ENCODE measurements at regions of chr11 and their contacts with region 1.

Region 1: DNA sequence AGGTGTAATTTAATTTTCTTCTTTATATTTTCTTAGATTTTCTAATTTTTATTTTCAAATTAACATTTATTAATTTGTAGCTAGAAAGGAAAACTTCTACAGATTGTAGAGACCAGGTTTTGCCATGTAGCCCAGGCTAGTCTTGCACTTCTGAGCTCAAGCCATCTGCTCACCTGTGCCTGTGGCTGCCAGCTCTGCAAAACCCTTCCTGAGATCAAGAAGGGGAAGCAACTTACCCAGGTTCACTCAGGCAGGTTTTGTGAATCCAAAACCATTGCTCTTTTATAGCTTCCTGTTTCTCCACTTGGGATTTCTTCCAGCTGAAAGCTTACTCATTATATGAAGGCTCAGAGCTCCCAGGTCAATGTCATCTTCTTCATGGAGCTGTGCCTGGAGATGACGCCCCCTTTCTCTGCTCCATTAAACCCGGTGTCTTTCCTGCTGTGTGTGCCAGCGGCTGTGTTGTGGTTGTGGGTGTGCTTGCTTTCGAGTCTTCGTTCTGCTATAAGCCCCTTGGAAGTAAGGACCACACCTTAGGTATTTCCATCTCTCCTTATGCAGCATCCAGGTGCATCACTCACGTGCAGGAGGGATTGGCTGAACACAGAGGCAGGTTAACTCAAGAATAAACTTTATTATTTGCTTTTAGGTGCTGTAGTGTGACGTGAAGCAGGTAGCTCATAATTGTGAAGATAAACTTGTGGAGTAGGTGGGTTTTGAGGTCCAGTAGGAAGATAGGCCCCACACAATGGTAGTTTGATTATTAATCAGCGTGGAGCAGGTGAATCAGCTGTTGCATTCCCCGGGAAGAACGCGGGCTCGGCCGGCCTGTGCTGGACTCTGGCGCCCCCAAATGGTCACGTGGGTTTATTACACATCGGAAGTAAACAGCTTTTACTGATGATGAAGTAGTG is 42.2 kb upstream of the INCENP start:
- DNase-seq: peak; percentile 8
- ATAC-seq: peak; percentile 85
- H3K4me3 ChIP-seq: peak overlapping the region; percentile 11; the same call in 1 of the 2 replicates
- H3K27ac ChIP-seq: no peak overlapping the region
- H3K4me1 ChIP-seq: peaks cover 5% of the 10 kb centered on the region; the same call in 1 of the 2 replicates
- H3K27me3 ChIP-seq: no peaks in the 10 kb centered on the region
- CTCF ChIP-seq: peak; percentile 89 to 99 (median 89); a peak in 5 of 6 replicates
- EP300 ChIP-seq: no peak
- POLR2A ChIP-seq: no peak
- RAD21 ChIP-seq: peak; percentile 96

Region 2: DNA sequence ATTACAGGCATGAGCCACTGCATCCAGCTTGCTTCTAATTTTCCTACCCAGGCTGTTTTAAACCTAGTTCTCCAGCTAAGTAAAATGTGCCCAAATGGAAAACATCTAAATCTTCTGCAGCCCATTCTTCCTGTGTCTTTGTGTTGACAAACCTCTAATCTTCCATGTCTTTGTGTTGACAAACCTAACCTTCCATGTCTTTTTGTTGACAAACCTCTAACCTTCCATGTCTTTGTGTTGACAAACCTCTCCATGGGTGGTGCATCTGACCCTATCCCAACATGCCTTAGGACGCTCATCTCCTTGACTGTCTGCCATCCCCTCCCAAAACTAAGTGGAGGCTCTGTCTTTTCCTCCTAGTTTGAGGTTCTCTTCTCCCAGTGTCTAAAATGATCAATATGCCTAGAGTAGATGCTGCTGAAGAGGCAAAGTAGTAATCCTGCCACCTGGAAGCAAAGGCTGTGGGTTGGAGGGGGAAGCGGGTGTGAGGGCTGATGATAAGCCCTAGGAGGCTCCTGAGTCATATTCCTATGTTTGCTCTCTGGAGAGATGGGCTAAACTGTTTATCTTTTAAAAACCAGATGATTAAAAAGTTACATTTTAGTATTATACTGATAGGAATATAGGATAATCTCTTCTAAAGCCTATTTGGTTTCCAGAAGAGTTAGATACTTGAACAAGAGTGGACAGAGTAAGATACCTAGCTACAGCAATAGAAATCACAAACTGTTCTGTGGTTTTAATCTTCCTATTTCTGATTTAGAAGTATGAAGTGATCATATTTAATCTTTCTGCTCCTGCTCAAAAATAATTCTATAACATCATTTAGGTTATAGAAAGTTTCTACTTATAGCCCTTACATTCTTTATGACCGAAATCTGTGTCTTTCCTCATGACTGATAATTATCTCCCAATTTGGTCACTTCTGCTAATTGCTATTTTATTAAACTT is 281.0 kb before region 1 on chr11:
- CTCF ChIA-PET with region 1: interaction called, 159 read pairs
- POLR2A ChIA-PET with region 1: interaction called, 7 read pairs
- RAD21 ChIA-PET with region 1: interaction called, 92 read pairs
- SMC1A ChIA-PET with region 1: interaction called, 79 read pairs
- in situ Hi-C with region 1: no loop called
- intact Hi-C with region 1: loop called (anchors 5 kb)
- DNase-seq: no peak
- ATAC-seq: no peak
- H3K4me3 ChIP-seq: no peak overlapping the region
- H3K27ac ChIP-seq: no peak overlapping the region
- H3K4me1 ChIP-seq: no peaks in the 10 kb centered on the region; the same call in 1 of the 2 replicates
- H3K27me3 ChIP-seq: no peaks in the 10 kb centered on the region
- CTCF ChIP-seq: no peak
- EP300 ChIP-seq: no peak
- POLR2A ChIP-seq: no peak
- RAD21 ChIP-seq: no peak

Region 3: GRCh38 chr11:61891331-61892084 is 190.1 kb before region 1 on chr11 and contains the start of gene FADS3:
- CTCF ChIA-PET with region 1: interaction called, 321 read pairs
- POLR2A ChIA-PET with region 1: no interaction called
- RAD21 ChIA-PET with region 1: interaction called, 175 read pairs
- SMC1A ChIA-PET with region 1: interaction called, 168 read pairs
- in situ Hi-C with region 1: loop called (anchors 5 kb)
- intact Hi-C with region 1: no loop called
- DNase-seq: no peak
- ATAC-seq: peak; percentile 86
- H3K4me3 ChIP-seq: peak within 1 kb of the TSS; percentile 83
- H3K27ac ChIP-seq: no peak within 1 kb of the TSS
- H3K4me1 ChIP-seq: peaks cover 7% of the 10 kb centered on the region
- H3K27me3 ChIP-seq: no peaks in the 10 kb centered on the region
- CTCF ChIP-seq: no peak; a peak in 1 of 6 replicates
- EP300 ChIP-seq: no peak
- POLR2A ChIP-seq: no peak
- RAD21 ChIP-seq: no peak
- polyA plus RNA-seq, gene FADS3: 0.23 to 0.44 TPM

Region 4: DNA sequence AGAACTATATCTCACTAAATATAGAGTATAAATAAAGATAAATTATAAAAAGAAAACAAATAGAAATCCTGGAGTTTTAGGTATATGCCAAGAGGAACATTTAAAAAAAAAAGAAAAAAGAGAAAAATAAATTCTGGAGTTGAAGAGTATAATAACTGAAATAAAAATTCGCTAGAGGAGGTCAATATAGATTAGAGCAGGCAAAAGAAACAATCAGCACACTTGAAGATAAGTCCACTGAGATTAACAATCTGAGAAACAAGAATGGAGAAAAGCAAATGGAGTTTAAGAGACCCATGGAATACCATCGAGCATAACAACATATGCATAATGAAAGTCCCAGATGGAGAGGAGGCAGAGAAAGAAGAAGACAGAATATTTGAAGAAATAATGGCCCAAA is 145.8 kb before region 1 on chr11:
- CTCF ChIA-PET with region 1: interaction called, 15 read pairs
- POLR2A ChIA-PET with region 1: no interaction called
- RAD21 ChIA-PET with region 1: no interaction called
- SMC1A ChIA-PET with region 1: no interaction called
- in situ Hi-C with region 1: no loop called
- intact Hi-C with region 1: no loop called
- DNase-seq: no peak
- ATAC-seq: no peak
- H3K4me3 ChIP-seq: no peak overlapping the region
- H3K27ac ChIP-seq: no peak overlapping the region
- H3K4me1 ChIP-seq: no peaks in the 10 kb centered on the region
- H3K27me3 ChIP-seq: no peaks in the 10 kb centered on the region; a peak in 2 of 4 replicates
- CTCF ChIP-seq: no peak
- EP300 ChIP-seq: no peak
- POLR2A ChIP-seq: no peak
- RAD21 ChIP-seq: no peak

Region 5: DNA sequence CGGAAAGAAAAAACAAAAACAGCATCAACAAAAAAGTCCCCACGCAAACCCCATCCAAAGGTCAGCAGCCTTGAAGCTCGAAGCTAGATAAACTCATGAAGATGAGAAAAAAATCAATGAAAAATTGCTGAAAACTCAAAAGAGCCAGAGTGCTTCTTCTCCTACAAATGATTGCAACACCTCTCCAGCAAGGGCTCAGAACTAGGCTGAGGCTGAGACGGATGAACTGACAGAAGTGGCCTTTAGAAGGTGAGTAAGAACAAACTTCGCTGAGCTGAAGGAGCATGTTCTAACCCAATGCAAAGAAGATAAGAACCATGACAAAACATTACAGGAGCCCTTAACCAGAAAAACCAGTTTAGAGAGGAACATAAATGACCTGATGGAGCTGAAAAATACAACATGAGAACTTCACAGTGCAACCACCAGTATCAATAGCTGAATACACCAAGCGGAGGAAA is 95.7 kb before region 1 on chr11:
- CTCF ChIA-PET with region 1: interaction called, 4 read pairs
- POLR2A ChIA-PET with region 1: no interaction called
- RAD21 ChIA-PET with region 1: no interaction called
- SMC1A ChIA-PET with region 1: interaction called, 10 read pairs
- in situ Hi-C with region 1: no loop called
- intact Hi-C with region 1: no loop called
- DNase-seq: no peak
- ATAC-seq: no peak
- H3K4me3 ChIP-seq: no peak overlapping the region
- H3K27ac ChIP-seq: no peak overlapping the region
- H3K4me1 ChIP-seq: no peaks in the 10 kb centered on the region
- H3K27me3 ChIP-seq: no peaks in the 10 kb centered on the region
- CTCF ChIP-seq: no peak
- EP300 ChIP-seq: no peak
- POLR2A ChIP-seq: no peak
- RAD21 ChIP-seq: no peak

Region 6: DNA sequence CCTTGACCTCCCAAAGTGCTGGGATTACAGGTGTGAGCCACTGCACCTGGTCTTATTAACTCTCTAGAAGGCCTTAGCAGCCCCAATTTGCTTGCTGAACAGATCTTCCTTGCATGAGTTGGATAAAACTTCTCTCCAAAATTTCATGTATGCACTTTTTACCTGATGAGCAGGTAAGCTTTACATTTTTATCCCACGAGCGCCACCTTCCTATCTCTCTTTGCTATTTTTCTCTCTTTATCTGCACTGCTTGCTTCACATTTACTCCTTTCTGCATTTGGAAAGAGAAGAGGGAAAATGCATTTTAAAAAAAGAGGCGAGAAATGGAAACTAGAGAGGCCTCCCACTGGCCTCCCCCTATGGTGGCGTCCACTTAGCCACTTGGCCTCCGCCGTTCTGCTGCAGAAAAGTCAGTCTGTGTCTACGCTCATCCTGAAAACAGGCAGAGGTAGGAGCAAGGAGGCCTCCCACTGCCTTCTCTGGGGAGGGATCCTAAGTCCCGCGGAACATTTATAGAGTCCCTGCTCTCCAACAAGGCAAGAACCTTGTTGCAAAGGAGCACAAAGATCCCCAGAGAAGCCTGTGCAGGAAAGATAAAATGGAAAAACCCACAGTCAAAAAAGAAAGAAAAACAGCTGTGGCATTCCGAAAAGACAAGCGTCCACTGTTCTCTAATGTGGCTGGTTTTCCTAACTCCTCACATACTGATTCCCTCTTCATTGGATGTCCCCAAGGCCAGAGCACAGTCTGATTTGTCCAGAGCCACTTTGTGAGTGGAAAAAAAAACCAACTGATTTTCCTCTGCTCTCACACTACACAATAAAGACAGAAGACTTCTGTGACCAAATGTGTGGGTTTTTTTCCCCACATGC is 20.0 kb before region 1 on chr11:
- CTCF ChIA-PET with region 1: interaction called, 13 read pairs
- POLR2A ChIA-PET with region 1: no interaction called
- RAD21 ChIA-PET with region 1: interaction called, 6 read pairs
- SMC1A ChIA-PET with region 1: interaction called, 4 read pairs
- in situ Hi-C with region 1: no loop called
- intact Hi-C with region 1: no loop called
- DNase-seq: no peak
- ATAC-seq: no peak
- H3K4me3 ChIP-seq: no peak overlapping the region
- H3K27ac ChIP-seq: no peak overlapping the region
- H3K4me1 ChIP-seq: no peaks in the 10 kb centered on the region
- H3K27me3 ChIP-seq: peaks cover 0 to 1% of the 10 kb centered on the region in 2 experiments; a peak in 1 of 4 replicates
- CTCF ChIP-seq: peak in 2 of 3 experiments; percentile 11 to 21; a peak in 1 of 6 replicates
- EP300 ChIP-seq: no peak
- POLR2A ChIP-seq: no peak
- RAD21 ChIP-seq: no peak